Aorta (tissue), 5 donors: ENCODE measurements at regions of chr4 and their contacts with region 1.

Region 1: GRCh38 chr4:185471235-185472102 is at the start of gene CCDC110:
- DNase-seq: peak; percentile 95 to 98
- ATAC-seq: peak; percentile 98
- H3K4me3 ChIP-seq: peak within 1 kb of the TSS; percentile 73 to 97
- H3K27ac ChIP-seq: peak within 1 kb of the TSS in 1 of 2 donors; percentile 61
- H3K4me1 ChIP-seq: no peaks in the 10 kb centered on the region
- H3K27me3 ChIP-seq: no peaks in the 10 kb centered on the region
- total RNA-seq, gene CCDC110: 3.0 to 3.8 TPM

Region 2: GRCh38 chr4:185425647-185426352 is 45.7 kb before region 1 on chr4 and contains the start of gene UFSP2:
- intact Hi-C with region 1: loop called (anchors 5 kb)
- DNase-seq: peak; percentile 93 to 95
- ATAC-seq: peak; percentile 98
- H3K4me3 ChIP-seq: peak within 1 kb of the TSS; percentile 89 to 92
- H3K27ac ChIP-seq: peak within 1 kb of the TSS; percentile 73 to 79
- H3K4me1 ChIP-seq: peaks cover 3 to 4% of the 10 kb centered on the region in 2 donors
- H3K27me3 ChIP-seq: no peaks in the 10 kb centered on the region
- total RNA-seq, gene UFSP2: 29.5 to 36.1 TPM

Region 3: GRCh38 chr4:185437809-185438208 is 33.7 kb before region 1 on chr4:
- intact Hi-C with region 1: no loop called
- DNase-seq: no peak
- ATAC-seq: no peak
- H3K4me3 ChIP-seq: no peak overlapping the region
- H3K27ac ChIP-seq: no peak overlapping the region
- H3K4me1 ChIP-seq: no peaks in the 10 kb centered on the region
- H3K27me3 ChIP-seq: no peaks in the 10 kb centered on the region

Region 4: GRCh38 chr4:185513489-185514181 is 42.2 kb after region 1 on chr4:
- intact Hi-C with region 1: loop called (anchors 5 kb)
- DNase-seq: no peak
- ATAC-seq: peak; percentile 66
- H3K4me3 ChIP-seq: no peak overlapping the region
- H3K27ac ChIP-seq: peak overlapping the region in 1 of 2 donors; percentile 32
- H3K4me1 ChIP-seq: peaks cover 2 to 5% of the 10 kb centered on the region in 2 donors
- H3K27me3 ChIP-seq: no peaks in the 10 kb centered on the region

Region 5: GRCh38 chr4:186037692-186038658 is 566.5 kb after region 1 on chr4:
- intact Hi-C with region 1: loop called in 1 of 2 experiments (anchors 10 kb)
- DNase-seq: no peak
- ATAC-seq: peak; percentile 95
- H3K4me3 ChIP-seq: no peak overlapping the region
- H3K27ac ChIP-seq: no peak overlapping the region
- H3K4me1 ChIP-seq: peaks cover 0 to 1% of the 10 kb centered on the region in 2 donors
- H3K27me3 ChIP-seq: no peaks in the 10 kb centered on the region